ENCODE measurements at regions of chr2 and their contacts with region 1.

Region 1: GRCh38 chr2:218849721-218850120 is 9.9 kb upstream of the WNT6 start:
- DNase-seq: peak; percentile 22 to 44
- ATAC-seq: no peak
- H3K4me3 ChIP-seq: no peak overlapping the region
- H3K27ac ChIP-seq: no peak overlapping the region
- H3K4me1 ChIP-seq: no peaks in the 10 kb centered on the region
- H3K27me3 ChIP-seq: no peaks in the 10 kb centered on the region

Region 2: DNA sequence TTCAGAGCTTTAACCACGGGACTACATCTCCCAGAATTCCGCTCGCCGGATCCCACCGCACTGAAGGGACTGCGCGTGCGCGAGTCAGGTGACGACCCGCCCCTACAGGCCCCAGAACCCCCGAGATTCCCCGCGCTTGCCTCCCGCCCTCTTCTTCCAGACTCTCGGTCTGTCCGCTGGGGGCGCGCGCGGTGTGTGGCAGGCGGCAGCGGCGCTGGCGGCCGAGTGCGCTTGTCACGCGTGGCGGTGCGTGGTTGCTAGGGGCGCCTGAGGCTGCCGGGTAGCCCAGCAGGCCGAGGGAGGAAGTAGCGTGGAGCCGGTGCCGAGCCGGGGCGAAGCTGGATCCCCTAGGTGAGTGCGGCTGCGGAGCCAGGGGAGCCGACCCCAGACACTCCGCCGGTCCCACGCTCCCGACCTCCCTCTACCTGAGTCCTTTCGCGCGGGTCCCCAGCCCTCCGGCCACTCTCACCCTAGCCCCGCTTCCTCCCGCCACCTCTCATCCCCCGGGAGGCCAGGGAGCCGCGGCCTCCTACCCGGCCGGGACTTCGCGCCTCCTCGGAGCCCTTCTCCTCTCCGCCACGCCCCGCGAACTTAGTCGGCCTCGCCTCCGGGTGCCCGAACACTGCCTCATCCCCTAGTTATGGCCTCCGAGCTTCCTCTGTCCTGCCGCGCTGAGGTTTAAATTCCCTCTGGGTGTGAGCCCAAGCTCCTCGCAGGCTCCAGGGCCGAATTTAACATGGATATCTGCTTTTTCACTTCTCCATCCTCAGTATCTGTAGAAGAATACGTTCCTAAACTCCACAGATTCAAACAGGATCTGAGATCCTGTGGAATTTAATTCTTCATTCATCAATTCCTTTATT is 138.8 kb before region 1 on chr2 and contains the start of gene TTLL4:
- intact Hi-C with region 1: loop called (anchors 1 to 2 kb)
- DNase-seq: peak; percentile 99 to 100
- ATAC-seq: peak; percentile 100
- H3K4me3 ChIP-seq: peak within 1 kb of the TSS; percentile 13 to 45
- H3K27ac ChIP-seq: peak within 1 kb of the TSS in 1 of 2 donors; percentile 14
- H3K4me1 ChIP-seq: no peaks in the 10 kb centered on the region
- H3K27me3 ChIP-seq: no peaks in the 10 kb centered on the region
- total RNA-seq, gene TTLL4: 22.3 to 36.3 TPM

Region 3: GRCh38 chr2:218727502-218728165 is 122.1 kb before region 1 on chr2:
- intact Hi-C with region 1: loop called (anchors 5 kb)
- DNase-seq: no peak
- ATAC-seq: no peak
- H3K4me3 ChIP-seq: no peak overlapping the region
- H3K27ac ChIP-seq: no peak overlapping the region
- H3K4me1 ChIP-seq: peaks cover 0 to 2% of the 10 kb centered on the region in 2 donors
- H3K27me3 ChIP-seq: no peaks in the 10 kb centered on the region

Region 4: DNA sequence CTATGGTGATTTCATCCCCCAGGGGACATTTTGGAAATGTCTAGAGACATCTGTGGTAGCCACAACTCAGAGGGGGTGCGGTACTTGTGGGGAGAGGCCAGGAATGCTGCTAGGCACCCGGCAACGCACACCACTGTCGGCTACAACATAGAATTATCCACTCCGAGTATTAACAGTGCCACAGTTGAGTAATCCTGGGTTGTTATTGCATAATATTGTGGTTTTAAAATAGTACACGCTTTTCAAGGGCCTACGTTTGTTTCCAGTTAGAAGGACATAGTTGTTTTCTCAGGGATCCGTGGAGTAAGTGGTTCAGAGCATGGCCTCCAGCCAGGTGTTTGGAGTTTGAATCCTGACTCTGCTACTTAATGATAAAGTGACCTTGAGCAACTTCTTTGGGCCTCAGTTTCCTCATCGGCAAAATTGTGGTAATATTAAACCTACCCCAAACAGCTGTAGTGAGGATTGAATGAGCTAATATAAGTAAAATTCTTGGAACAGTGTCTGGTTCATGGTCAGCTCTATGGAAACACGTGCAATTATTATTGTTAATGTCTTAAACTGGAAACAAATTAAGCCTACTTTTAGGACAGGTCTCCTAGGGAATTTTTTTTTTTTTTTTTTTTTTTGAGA is 43.3 kb before region 1 on chr2:
- intact Hi-C with region 1: loop called in 1 of 2 experiments (anchors 1 kb)
- DNase-seq: peak; percentile 89 to 90
- ATAC-seq: peak; percentile 97
- H3K4me3 ChIP-seq: no peak overlapping the region
- H3K27ac ChIP-seq: peak overlapping the region; percentile 51 to 76
- H3K4me1 ChIP-seq: peaks cover 2 to 6% of the 10 kb centered on the region in 2 donors
- H3K27me3 ChIP-seq: no peaks in the 10 kb centered on the region

Region 5: GRCh38 chr2:218908721-218909619 is 59.2 kb after region 1 on chr2:
- intact Hi-C with region 1: no loop called
- DNase-seq: peak; percentile 95 to 98
- ATAC-seq: peak; percentile 96
- H3K4me3 ChIP-seq: peak overlapping the region; percentile 15 to 63
- H3K27ac ChIP-seq: no peak overlapping the region
- H3K4me1 ChIP-seq: no peaks in the 10 kb centered on the region
- H3K27me3 ChIP-seq: no peaks in the 10 kb centered on the region

Region 6: GRCh38 chr2:219079417-219079816 is 229.7 kb after region 1 on chr2:
- intact Hi-C with region 1: no loop called
- DNase-seq: no peak
- ATAC-seq: no peak
- H3K4me3 ChIP-seq: no peak overlapping the region
- H3K27ac ChIP-seq: no peak overlapping the region
- H3K4me1 ChIP-seq: no peaks in the 10 kb centered on the region
- H3K27me3 ChIP-seq: no peaks in the 10 kb centered on the region

Measured in aorta (tissue), 5 donors.